CD14-positive monocyte (primary cell): ENCODE measurements at regions of chr19 and their contacts with region 1.

Region 1: DNA sequence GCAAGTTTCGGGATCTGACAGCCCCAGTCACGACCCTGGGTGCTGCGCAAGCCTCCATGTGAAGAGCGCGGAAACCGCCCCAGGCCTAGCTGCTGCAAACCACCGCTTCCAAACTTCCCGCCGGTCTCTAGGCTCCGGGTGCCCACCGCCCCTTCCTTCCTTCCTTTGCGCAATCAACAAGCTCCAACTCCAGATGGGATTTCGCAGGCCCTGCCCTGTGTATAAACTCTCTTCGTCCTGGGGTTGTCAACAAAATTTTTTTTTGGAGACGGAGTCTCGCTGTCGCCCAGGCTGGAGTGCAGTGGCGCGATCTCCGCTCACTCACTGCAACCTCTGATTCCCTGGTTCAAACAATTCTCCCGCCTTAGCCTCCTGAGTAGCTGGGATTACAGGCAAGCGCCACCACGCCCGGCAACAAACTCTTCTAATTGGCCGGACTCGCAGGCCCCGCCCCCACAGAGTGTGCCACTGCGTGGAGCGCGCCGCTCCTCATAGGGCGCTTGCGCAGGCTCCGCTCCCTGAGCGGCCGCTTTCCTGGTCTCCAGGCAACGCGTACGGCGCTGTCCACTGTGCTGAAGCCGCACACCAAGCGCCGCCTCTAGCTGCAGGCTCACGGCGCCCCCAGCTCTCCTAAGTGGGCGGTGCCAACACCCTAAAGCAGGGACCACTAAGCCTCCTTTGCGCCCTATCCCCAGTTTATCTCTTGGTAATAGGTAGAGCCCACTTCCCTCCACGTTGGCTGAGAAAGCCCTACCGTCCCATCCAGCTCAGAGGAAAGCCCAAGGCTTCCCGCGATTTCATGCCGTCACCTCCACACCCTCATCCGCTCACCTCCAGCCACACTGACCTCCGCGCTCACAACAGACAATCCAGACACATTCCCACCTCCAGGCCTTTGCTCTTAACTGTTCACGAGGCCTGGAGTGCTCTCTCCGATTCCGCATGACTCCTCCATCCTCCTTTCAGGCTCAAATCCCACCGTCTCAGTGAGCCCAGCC is 5.5 kb upstream of the QTRT1 start:
- DNase-seq: peak; percentile 90 to 96 (median 91)
- H3K4me3 ChIP-seq: peak overlapping the region in 1 of 3 experiments; percentile 67
- H3K4me3 Mint-ChIP-seq: peak overlapping the region; percentile 75 to 89
- H3K27ac ChIP-seq: no peak overlapping the region
- H3K27ac Mint-ChIP-seq: peak overlapping the region in 2 of 7 donors; percentile 76 to 81
- H3K4me1 ChIP-seq: peaks cover 10 to 16% of the 10 kb centered on the region in 2 donors
- H3K4me1 Mint-ChIP-seq: peaks cover 16% of the 10 kb centered on the region
- H3K27me3 ChIP-seq: no peaks in the 10 kb centered on the region
- H3K27me3 Mint-ChIP-seq: peaks cover 6 to 9% (median 7%) of the 10 kb centered on the region in 3 donors
- CTCF ChIP-seq: no peak

Region 2: GRCh38 chr19:10478903-10479384 is 216.8 kb before region 1 on chr19:
- intact Hi-C with region 1: loop called in 1 of 2 experiments (anchors 5 kb)
- DNase-seq: peak; percentile 66 to 85 (median 73)
- H3K4me3 ChIP-seq: peak overlapping the region in 2 of 3 experiments; percentile 25 to 66
- H3K4me3 Mint-ChIP-seq: peak overlapping the region; percentile 80 to 84
- H3K27ac ChIP-seq: no peak overlapping the region
- H3K27ac Mint-ChIP-seq: peak overlapping the region in 3 of 7 donors; percentile 15 to 66 (median 60)
- H3K4me1 ChIP-seq: peaks cover 21 to 22% of the 10 kb centered on the region in 2 donors
- H3K4me1 Mint-ChIP-seq: peaks cover 21% of the 10 kb centered on the region
- H3K27me3 ChIP-seq: peaks cover 0 to 2% of the 10 kb centered on the region in 2 donors
- H3K27me3 Mint-ChIP-seq: peaks cover 9 to 19% (median 11%) of the 10 kb centered on the region in 3 donors
- CTCF ChIP-seq: peak; percentile 83

Region 3: GRCh38 chr19:10502524-10503001 is 193.1 kb before region 1 on chr19:
- intact Hi-C with region 1: loop called (anchors 5 to 10 kb)
- DNase-seq: peak; percentile 85 to 88 (median 88)
- H3K4me3 ChIP-seq: peak overlapping the region; percentile 89 to 99 (median 91)
- H3K4me3 Mint-ChIP-seq: peak overlapping the region; percentile 88 to 93
- H3K27ac ChIP-seq: peak overlapping the region; percentile 88 to 89
- H3K27ac Mint-ChIP-seq: peak overlapping the region; percentile 89 to 96 (median 93)
- H3K4me1 ChIP-seq: peaks cover 14 to 28% of the 10 kb centered on the region in 2 donors
- H3K4me1 Mint-ChIP-seq: peaks cover 33% of the 10 kb centered on the region
- H3K27me3 ChIP-seq: no peaks in the 10 kb centered on the region
- H3K27me3 Mint-ChIP-seq: peaks cover 0 to 5% (median 2%) of the 10 kb centered on the region in 3 donors
- CTCF ChIP-seq: no peak

Region 4: GRCh38 chr19:10543420-10544241 is 152.1 kb before region 1 on chr19 and contains the start of gene ATG4D:
- intact Hi-C with region 1: loop called in 1 of 2 experiments (anchors 5 kb)
- DNase-seq: peak; percentile 55 to 74 (median 66)
- H3K4me3 ChIP-seq: peak within 1 kb of the TSS; percentile 76 to 95 (median 80)
- H3K4me3 Mint-ChIP-seq: peak within 1 kb of the TSS; percentile 84 to 90
- H3K27ac ChIP-seq: peak within 1 kb of the TSS; percentile 28 to 83
- H3K27ac Mint-ChIP-seq: peak within 1 kb of the TSS in 6 of 7 donors; percentile 35 to 89 (median 76)
- H3K4me1 ChIP-seq: peaks cover 24 to 33% of the 10 kb centered on the region in 2 donors
- H3K4me1 Mint-ChIP-seq: peaks cover 27% of the 10 kb centered on the region
- H3K27me3 ChIP-seq: no peaks in the 10 kb centered on the region
- H3K27me3 Mint-ChIP-seq: peaks cover 2 to 6% (median 5%) of the 10 kb centered on the region in 3 donors
- CTCF ChIP-seq: no peak
- polyA plus RNA-seq, gene ATG4D: 10.7 to 52.8 (median 11.9) TPM

Region 5: DNA sequence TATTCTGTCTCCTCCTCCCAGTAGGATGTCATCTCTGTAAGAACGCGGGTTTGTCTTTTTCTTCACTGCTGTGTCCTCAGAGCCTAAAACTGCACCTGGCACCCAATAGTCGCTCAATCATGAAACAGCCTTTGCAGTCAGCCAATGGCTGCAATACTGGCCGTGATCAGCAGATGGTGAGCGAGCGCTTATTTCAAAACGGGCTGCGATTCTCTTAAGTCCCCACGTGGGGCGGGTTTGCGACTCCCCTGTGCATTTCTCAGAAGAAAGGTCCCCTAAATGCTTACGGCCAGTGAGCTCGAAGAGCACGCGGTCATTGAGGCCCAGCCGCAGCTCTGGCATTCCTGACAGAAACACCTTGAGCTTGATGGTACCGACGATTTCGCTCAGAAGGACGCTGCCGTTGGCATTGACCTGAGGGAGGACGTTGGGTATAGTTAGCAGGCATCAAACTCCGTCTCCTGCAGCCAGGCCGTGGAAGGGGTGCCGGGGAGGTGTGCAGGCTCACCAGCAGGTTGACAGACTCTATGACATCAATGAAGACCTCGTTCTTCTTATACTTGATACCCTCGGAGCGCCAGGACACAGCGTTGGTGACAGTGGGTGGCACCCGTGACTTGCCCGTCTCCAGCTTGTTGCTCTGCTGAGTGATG is 114.6 kb before region 1 on chr19:
- intact Hi-C with region 1: loop called (anchors 1 to 2 kb)
- DNase-seq: peak; percentile 83 to 93 (median 87)
- H3K4me3 ChIP-seq: no peak overlapping the region
- H3K4me3 Mint-ChIP-seq: peak overlapping the region in 1 of 2 donors; percentile 21
- H3K27ac ChIP-seq: no peak overlapping the region
- H3K27ac Mint-ChIP-seq: peak overlapping the region in 1 of 7 donors; percentile 50
- H3K4me1 ChIP-seq: peaks cover 0 to 3% of the 10 kb centered on the region in 2 donors
- H3K4me1 Mint-ChIP-seq: peaks cover 16% of the 10 kb centered on the region
- H3K27me3 ChIP-seq: no peaks in the 10 kb centered on the region
- H3K27me3 Mint-ChIP-seq: peaks cover 3 to 11% (median 10%) of the 10 kb centered on the region in 3 donors
- CTCF ChIP-seq: peak; percentile 98

Region 6: GRCh38 chr19:10602330-10603083 is 93.2 kb before region 1 on chr19:
- intact Hi-C with region 1: no loop called
- DNase-seq: peak; percentile 62 to 73 (median 70)
- H3K4me3 ChIP-seq: peak overlapping the region; percentile 92 to 95 (median 92)
- H3K4me3 Mint-ChIP-seq: peak overlapping the region; percentile 89 to 92
- H3K27ac ChIP-seq: peak overlapping the region; percentile 75 to 79
- H3K27ac Mint-ChIP-seq: peak overlapping the region; percentile 87 to 95 (median 92)
- H3K4me1 ChIP-seq: peaks cover 29 to 35% of the 10 kb centered on the region in 2 donors
- H3K4me1 Mint-ChIP-seq: peaks cover 30% of the 10 kb centered on the region
- H3K27me3 ChIP-seq: no peaks in the 10 kb centered on the region
- H3K27me3 Mint-ChIP-seq: peaks cover 1 to 5% (median 3%) of the 10 kb centered on the region in 3 donors
- CTCF ChIP-seq: no peak

Region 7: GRCh38 chr19:10625003-10625776 is 70.5 kb before region 1 on chr19 and contains the start of gene SLC44A2:
- intact Hi-C with region 1: no loop called
- DNase-seq: no peak
- H3K4me3 ChIP-seq: no peak within 1 kb of the TSS
- H3K4me3 Mint-ChIP-seq: peak within 1 kb of the TSS; percentile 27 to 51
- H3K27ac ChIP-seq: no peak within 1 kb of the TSS
- H3K27ac Mint-ChIP-seq: peak within 1 kb of the TSS in 1 of 7 donors; percentile 30
- H3K4me1 ChIP-seq: peaks cover 0 to 6% of the 10 kb centered on the region in 2 donors
- H3K4me1 Mint-ChIP-seq: peaks cover 10% of the 10 kb centered on the region
- H3K27me3 ChIP-seq: no peaks in the 10 kb centered on the region
- H3K27me3 Mint-ChIP-seq: peaks cover 0 to 11% (median 3%) of the 10 kb centered on the region in 3 donors
- CTCF ChIP-seq: no peak
- polyA plus RNA-seq, gene SLC44A2: 43.5 to 95.9 (median 69.4) TPM

Region 8: GRCh38 chr19:10662384-10663251 is 33.1 kb before region 1 on chr19:
- intact Hi-C with region 1: loop called in 1 of 2 experiments (anchors 5 kb)
- DNase-seq: no peak
- H3K4me3 ChIP-seq: no peak overlapping the region
- H3K4me3 Mint-ChIP-seq: no peak overlapping the region
- H3K27ac ChIP-seq: no peak overlapping the region
- H3K27ac Mint-ChIP-seq: peak overlapping the region in 4 of 7 donors; percentile 17 to 45 (median 30)
- H3K4me1 ChIP-seq: no peaks in the 10 kb centered on the region
- H3K4me1 Mint-ChIP-seq: peaks cover 18% of the 10 kb centered on the region
- H3K27me3 ChIP-seq: no peaks in the 10 kb centered on the region
- H3K27me3 Mint-ChIP-seq: no peaks in the 10 kb centered on the region
- CTCF ChIP-seq: no peak